ENCODE measurements at regions of chr10 and their contacts with region 1.

Region 1: GRCh38 chr10:24360282-24361127 is 151.6 kb downstream of the KIAA1217 start:
- DNase-seq: peak; percentile 67 to 84
- H3K4me3 ChIP-seq: no peak overlapping the region
- H3K27ac ChIP-seq: peak overlapping the region; percentile 10 to 64
- H3K4me1 ChIP-seq: no peaks in the 10 kb centered on the region
- H3K27me3 ChIP-seq: no peaks in the 10 kb centered on the region
- CTCF ChIP-seq: peak; percentile 73 to 80 (median 74)
- POLR2A ChIP-seq: no peak

Region 2: GRCh38 chr10:23067939-23068775 is 1292.3 kb before region 1 on chr10:
- intact Hi-C with region 1: no loop called
- DNase-seq: peak; percentile 35 to 68
- H3K4me3 ChIP-seq: no peak overlapping the region
- H3K27ac ChIP-seq: no peak overlapping the region
- H3K4me1 ChIP-seq: no peaks in the 10 kb centered on the region
- H3K27me3 ChIP-seq: no peaks in the 10 kb centered on the region
- CTCF ChIP-seq: peak; percentile 50 to 51 (median 51)
- POLR2A ChIP-seq: no peak

Region 3: DNA sequence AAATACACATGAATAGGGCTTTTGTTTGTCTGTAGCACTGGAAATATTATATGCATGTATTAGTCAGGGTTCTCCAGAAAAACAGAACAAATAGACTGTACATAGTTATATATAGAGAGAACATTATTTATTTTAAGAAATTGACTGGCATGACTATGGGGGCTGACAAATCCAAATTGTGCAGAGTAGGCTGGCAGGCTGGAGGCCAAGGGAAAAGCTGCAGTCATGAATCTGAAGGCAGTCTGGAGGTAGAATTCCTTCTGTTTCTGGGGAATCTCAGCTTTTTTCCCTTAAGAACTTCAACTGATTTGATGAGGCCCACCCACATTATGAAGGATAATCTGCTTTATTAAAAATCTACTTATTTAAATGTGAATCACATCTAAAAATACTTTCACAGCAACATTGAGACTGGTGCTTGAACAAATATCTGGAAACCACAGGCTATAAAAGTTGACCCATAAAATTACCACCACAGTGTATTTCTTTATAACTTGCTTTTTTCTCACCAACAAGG is 495.8 kb before region 1 on chr10:
- intact Hi-C with region 1: loop called (anchors 5 kb)
- DNase-seq: no peak
- H3K4me3 ChIP-seq: no peak overlapping the region
- H3K27ac ChIP-seq: no peak overlapping the region
- H3K4me1 ChIP-seq: no peaks in the 10 kb centered on the region
- H3K27me3 ChIP-seq: no peaks in the 10 kb centered on the region
- CTCF ChIP-seq: no peak
- POLR2A ChIP-seq: no peak

Region 4: DNA sequence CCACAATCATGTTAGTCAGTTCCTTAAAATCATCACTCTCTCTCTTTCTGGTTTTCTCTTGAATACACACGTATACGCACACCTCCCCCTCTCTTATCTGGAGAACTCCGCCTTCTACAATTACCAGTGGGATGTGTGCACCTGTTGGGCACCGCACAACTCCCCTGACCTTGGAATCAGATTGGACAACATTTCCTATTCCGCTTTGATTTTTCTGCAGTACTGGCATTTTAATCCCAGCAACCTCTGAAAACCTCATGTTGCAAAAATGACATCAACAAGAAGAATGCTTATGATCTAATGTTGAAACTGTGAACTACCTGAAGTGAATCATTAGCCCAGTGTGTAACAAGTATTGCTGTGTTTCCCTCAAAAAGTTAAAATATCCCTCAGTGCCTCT is 42.0 kb before region 1 on chr10:
- intact Hi-C with region 1: no loop called
- DNase-seq: no peak
- H3K4me3 ChIP-seq: no peak overlapping the region
- H3K27ac ChIP-seq: no peak overlapping the region
- H3K4me1 ChIP-seq: no peaks in the 10 kb centered on the region
- H3K27me3 ChIP-seq: no peaks in the 10 kb centered on the region
- CTCF ChIP-seq: no peak
- POLR2A ChIP-seq: no peak

Region 5: GRCh38 chr10:24449321-24449740 is 88.8 kb after region 1 on chr10:
- intact Hi-C with region 1: no loop called
- DNase-seq: no peak
- H3K4me3 ChIP-seq: peak overlapping the region in 2 of 3 donors; percentile 18 to 51
- H3K27ac ChIP-seq: peak overlapping the region; percentile 80 to 82
- H3K4me1 ChIP-seq: peaks cover 0 to 16% of the 10 kb centered on the region in 2 donors
- H3K27me3 ChIP-seq: no peaks in the 10 kb centered on the region
- CTCF ChIP-seq: no peak
- POLR2A ChIP-seq: no peak

Region 6: GRCh38 chr10:24771941-24772694 is 411.6 kb after region 1 on chr10:
- intact Hi-C with region 1: no loop called
- DNase-seq: no peak
- H3K4me3 ChIP-seq: no peak overlapping the region
- H3K27ac ChIP-seq: no peak overlapping the region
- H3K4me1 ChIP-seq: no peaks in the 10 kb centered on the region
- H3K27me3 ChIP-seq: no peaks in the 10 kb centered on the region
- CTCF ChIP-seq: no peak
- POLR2A ChIP-seq: no peak

Measured in breast epithelium (tissue), 4 donors.